Caco-2 (cell line): ENCODE measurements at regions of chr7 and their contacts with region 1.

Region 1: DNA sequence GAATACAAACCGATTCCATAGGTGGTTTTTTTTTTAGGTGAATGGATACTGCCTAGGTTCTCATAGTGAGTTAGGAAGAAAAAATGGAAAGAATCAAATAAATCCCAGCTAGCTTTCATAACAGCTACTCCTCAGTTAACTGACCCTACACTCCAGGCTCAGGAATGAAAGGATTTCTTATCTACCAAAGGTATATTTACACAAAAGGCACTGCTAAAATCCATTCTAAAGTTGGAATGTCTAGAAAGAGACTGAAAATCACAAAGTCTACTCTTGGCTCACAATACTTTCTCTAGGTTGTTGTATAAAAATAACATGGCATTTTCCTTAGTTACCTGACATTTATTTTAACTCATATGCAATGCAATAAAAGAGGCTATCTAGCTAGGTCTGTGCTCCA is 375.2 kb downstream of the MAGI2 start:
- DNase-seq: peak in 1 of 2 experiments; percentile 11
- H3K4me3 ChIP-seq: no peak overlapping the region
- H3K4me3 Mint-ChIP-seq: peak overlapping the region; percentile 58
- H3K27ac Mint-ChIP-seq: peak overlapping the region; percentile 72
- H3K4me1 ChIP-seq: peaks cover 19% of the 10 kb centered on the region
- H3K4me1 Mint-ChIP-seq: peaks cover 24% of the 10 kb centered on the region
- H3K27me3 ChIP-seq: no peaks in the 10 kb centered on the region
- H3K27me3 Mint-ChIP-seq: no peaks in the 10 kb centered on the region
- CTCF ChIP-seq: no peak

Region 2: GRCh38 chr7:78716876-78717275 is 361.4 kb before region 1 on chr7:
- CTCF ChIA-PET with region 1: no interaction called
- POLR2A ChIA-PET with region 1: no interaction called
- intact Hi-C with region 1: loop called (anchors 5 kb)
- DNase-seq: peak; percentile 81 to 91
- H3K4me3 ChIP-seq: no peak overlapping the region
- H3K4me3 Mint-ChIP-seq: peak overlapping the region; percentile 54
- H3K27ac Mint-ChIP-seq: peak overlapping the region; percentile 95
- H3K4me1 ChIP-seq: peaks cover 26% of the 10 kb centered on the region
- H3K4me1 Mint-ChIP-seq: peaks cover 15% of the 10 kb centered on the region
- H3K27me3 ChIP-seq: no peaks in the 10 kb centered on the region
- H3K27me3 Mint-ChIP-seq: no peaks in the 10 kb centered on the region
- CTCF ChIP-seq: no peak

Region 3: GRCh38 chr7:78912781-78913180 is 165.5 kb before region 1 on chr7:
- CTCF ChIA-PET with region 1: no interaction called
- POLR2A ChIA-PET with region 1: no interaction called
- intact Hi-C with region 1: no loop called
- DNase-seq: no peak
- H3K4me3 ChIP-seq: no peak overlapping the region
- H3K4me3 Mint-ChIP-seq: no peak overlapping the region
- H3K27ac Mint-ChIP-seq: no peak overlapping the region
- H3K4me1 ChIP-seq: no peaks in the 10 kb centered on the region
- H3K4me1 Mint-ChIP-seq: no peaks in the 10 kb centered on the region
- H3K27me3 ChIP-seq: no peaks in the 10 kb centered on the region
- H3K27me3 Mint-ChIP-seq: peaks cover 3% of the 10 kb centered on the region
- CTCF ChIP-seq: no peak